Activated CD4-positive, alpha-beta T cell treated with anti-CD3 and anti-CD28 coated beads for 36 hours (primary cell): ENCODE measurements at regions of chr17 and their contacts with region 1.

Region 1: DNA sequence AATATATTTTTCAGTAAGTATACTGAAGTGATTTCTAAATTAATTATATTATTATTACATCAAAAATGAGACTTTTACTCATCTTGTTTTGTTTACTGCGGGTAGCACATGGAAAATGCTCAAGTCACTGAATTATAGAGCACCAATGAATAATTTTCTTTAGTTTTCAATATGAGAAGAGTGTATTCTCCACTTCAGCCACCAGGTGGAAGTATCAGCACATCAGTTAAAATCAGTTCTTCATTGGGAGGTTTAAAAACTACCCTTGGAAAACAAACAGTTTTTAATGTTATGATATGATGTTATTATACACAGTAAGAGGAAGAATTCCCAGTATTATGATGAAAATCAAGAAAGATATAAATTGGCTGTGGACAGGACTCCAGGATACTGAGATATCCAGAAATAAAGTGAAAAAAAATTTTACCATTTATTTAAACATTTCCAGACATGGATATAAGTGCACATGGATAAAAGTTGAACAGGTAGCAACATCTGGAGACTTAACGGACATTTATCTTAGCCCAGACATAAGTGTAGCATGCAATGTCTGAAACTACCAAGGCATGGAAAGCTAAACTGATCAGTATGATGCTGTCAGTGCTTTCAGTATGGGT is 467.3 kb downstream of the KCNJ2 start:
- DNase-seq: peak; percentile 5
- ATAC-seq: no peak
- H3K4me3 Mint-ChIP-seq: no peak overlapping the region
- H3K27ac Mint-ChIP-seq: no peak overlapping the region
- H3K4me1 Mint-ChIP-seq: no peaks in the 10 kb centered on the region
- H3K27me3 Mint-ChIP-seq: peaks cover 2% of the 10 kb centered on the region

Region 2: GRCh38 chr17:70478902-70479301 is 157.7 kb before region 1 on chr17:
- CTCF ChIA-PET with region 1: no interaction called
- POLR2A ChIA-PET with region 1: no interaction called
- intact Hi-C with region 1: no loop called
- DNase-seq: no peak
- ATAC-seq: no peak
- H3K4me3 Mint-ChIP-seq: no peak overlapping the region
- H3K27ac Mint-ChIP-seq: no peak overlapping the region
- H3K4me1 Mint-ChIP-seq: no peaks in the 10 kb centered on the region
- H3K27me3 Mint-ChIP-seq: no peaks in the 10 kb centered on the region

Region 3: DNA sequence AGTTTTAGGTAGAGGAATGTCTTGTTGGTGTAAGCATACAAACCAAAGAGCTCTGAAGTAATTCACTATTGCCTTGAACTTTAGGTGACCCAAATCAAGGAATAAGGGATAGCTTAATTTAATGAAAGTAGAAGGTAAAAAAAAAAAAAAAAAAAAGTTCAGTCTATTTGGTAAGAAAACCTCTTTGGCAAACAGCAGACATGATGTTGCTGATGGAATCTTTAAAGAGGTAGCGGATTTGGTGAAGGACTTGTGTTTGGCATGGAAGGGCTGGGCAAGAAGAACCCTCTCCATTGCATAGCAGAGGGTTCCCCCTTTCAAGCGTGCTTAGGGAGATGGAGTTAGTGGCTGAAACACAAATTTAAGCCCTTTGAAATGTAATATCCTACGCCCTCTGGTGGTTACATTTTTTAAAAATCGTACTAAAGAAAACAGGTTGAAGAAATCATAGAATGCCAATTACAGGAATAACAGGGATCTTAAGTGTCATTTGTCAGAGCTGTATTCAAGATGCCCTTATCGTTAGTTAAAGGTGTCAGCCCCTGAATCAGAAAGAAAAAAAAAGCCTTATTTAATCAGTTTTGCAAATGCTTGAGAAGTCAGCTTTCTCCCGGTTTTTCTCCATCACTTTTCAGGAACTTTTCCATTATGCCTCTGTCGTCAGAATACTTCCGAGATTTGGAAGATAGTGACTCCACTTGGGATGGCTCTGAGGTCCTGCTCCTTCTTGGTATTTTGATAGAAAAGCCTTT is 84.2 kb before region 1 on chr17:
- CTCF ChIA-PET with region 1: no interaction called
- POLR2A ChIA-PET with region 1: no interaction called
- intact Hi-C with region 1: no loop called
- DNase-seq: no peak
- ATAC-seq: no peak
- H3K4me3 Mint-ChIP-seq: no peak overlapping the region
- H3K27ac Mint-ChIP-seq: no peak overlapping the region
- H3K4me1 Mint-ChIP-seq: no peaks in the 10 kb centered on the region
- H3K27me3 Mint-ChIP-seq: no peaks in the 10 kb centered on the region

Region 4: DNA sequence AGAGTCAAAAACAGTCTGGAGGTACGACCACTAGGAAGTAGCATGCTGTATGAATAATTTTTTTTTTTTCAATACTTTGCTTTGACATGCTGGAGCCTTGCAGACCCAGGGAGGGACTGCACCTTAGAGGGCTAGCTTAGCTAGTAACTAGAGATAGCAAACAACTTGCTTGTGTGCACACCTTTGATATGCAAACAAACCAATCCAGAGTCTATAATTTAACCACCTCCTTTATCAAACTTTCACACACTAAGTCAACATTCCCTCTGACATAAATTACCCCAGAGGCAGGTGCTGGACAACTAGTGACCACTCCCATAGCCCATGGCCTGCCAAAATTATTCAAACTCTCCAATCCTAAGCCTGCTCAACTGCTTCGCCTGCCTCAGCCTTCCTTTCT is 358.5 kb after region 1 on chr17:
- CTCF ChIA-PET with region 1: no interaction called
- POLR2A ChIA-PET with region 1: no interaction called
- intact Hi-C with region 1: no loop called
- DNase-seq: no peak
- ATAC-seq: no peak
- H3K4me3 Mint-ChIP-seq: no peak overlapping the region
- H3K27ac Mint-ChIP-seq: no peak overlapping the region
- H3K4me1 Mint-ChIP-seq: no peaks in the 10 kb centered on the region
- H3K27me3 Mint-ChIP-seq: no peaks in the 10 kb centered on the region

Region 5: DNA sequence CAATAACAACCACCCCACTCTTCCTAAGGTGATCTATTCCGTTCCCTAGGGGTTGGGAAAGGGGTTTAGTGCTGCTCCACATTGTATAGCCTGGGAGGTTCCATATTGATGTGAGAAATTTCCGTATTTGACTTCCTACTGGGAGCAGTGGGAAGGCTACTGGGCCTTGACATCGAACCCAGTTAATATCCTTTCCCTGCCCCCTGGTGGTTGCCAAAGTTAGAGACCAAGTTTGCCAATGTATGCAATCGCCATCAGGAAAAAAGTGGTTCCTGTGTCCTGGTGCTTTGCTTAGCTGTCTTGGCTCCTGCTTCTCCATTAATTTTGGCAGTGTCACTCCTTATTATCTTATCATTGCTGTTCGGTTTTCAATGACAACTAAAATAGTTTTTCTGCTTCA is 447.6 kb after region 1 on chr17:
- CTCF ChIA-PET with region 1: no interaction called
- POLR2A ChIA-PET with region 1: no interaction called
- intact Hi-C with region 1: loop called (anchors 2 to 10 kb)
- DNase-seq: no peak
- ATAC-seq: no peak
- H3K4me3 Mint-ChIP-seq: no peak overlapping the region
- H3K27ac Mint-ChIP-seq: no peak overlapping the region
- H3K4me1 Mint-ChIP-seq: no peaks in the 10 kb centered on the region
- H3K27me3 Mint-ChIP-seq: no peaks in the 10 kb centered on the region

Region 6: DNA sequence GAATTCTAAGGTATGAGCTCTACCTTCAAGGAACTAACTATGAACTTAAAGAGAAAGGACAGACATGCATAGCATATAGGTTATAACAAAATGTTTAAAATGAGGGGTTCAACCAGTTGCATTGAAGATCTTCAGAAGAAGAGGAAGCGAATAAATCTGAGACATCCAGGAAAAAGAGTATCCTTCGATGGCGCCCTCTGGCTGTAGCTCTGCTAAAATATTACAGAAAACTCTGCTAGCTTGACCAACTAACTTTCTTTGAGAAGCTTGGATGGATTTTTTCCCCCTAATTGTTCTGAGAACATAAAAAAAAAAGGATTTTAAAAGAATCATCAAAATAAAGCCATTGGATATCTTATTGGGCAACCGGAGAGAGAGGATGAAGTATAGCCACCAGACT is 824.3 kb after region 1 on chr17:
- CTCF ChIA-PET with region 1: no interaction called
- POLR2A ChIA-PET with region 1: no interaction called
- intact Hi-C with region 1: loop called in 1 of 2 experiments (anchors 5 kb)
- DNase-seq: peak; percentile 8
- ATAC-seq: no peak
- H3K4me3 Mint-ChIP-seq: no peak overlapping the region
- H3K27ac Mint-ChIP-seq: no peak overlapping the region
- H3K4me1 Mint-ChIP-seq: no peaks in the 10 kb centered on the region
- H3K27me3 Mint-ChIP-seq: no peaks in the 10 kb centered on the region

Region 7: DNA sequence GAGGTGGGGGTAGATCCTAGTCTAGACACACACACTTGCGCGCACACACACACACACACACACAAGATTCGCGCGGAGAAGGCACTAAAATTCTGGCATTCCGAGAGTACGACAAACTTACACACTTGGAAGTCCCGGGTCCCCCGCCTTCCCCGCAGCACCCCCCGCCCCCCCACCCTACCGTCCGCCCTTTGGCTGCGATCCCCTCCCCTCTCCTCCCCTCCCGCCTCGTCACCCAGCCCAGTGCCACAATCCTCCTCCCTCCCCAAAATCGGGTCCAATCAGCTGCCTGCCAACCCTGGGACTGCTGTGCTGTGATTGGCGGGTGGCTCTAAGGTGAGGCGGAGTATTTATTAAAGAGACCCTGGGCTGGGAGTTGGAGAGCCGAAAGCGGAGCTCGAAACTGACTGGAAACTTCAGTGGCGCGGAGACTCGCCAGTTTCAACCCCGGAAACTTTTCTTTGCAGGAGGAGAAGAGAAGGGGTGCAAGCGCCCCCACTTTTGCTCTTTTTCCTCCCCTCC is 1484.1 kb after region 1 on chr17 and contains the start of gene SOX9:
- CTCF ChIA-PET with region 1: no interaction called
- POLR2A ChIA-PET with region 1: no interaction called
- intact Hi-C with region 1: loop called in 1 of 2 experiments (anchors 1 kb)
- DNase-seq: no peak
- ATAC-seq: no peak
- H3K4me3 Mint-ChIP-seq: peak within 1 kb of the TSS; percentile 35
- H3K27ac Mint-ChIP-seq: no peak within 1 kb of the TSS
- H3K4me1 Mint-ChIP-seq: peaks cover 14% of the 10 kb centered on the region
- H3K27me3 Mint-ChIP-seq: peaks cover 68% of the 10 kb centered on the region
- total RNA-seq, gene SOX9: not detected

Region 8: DNA sequence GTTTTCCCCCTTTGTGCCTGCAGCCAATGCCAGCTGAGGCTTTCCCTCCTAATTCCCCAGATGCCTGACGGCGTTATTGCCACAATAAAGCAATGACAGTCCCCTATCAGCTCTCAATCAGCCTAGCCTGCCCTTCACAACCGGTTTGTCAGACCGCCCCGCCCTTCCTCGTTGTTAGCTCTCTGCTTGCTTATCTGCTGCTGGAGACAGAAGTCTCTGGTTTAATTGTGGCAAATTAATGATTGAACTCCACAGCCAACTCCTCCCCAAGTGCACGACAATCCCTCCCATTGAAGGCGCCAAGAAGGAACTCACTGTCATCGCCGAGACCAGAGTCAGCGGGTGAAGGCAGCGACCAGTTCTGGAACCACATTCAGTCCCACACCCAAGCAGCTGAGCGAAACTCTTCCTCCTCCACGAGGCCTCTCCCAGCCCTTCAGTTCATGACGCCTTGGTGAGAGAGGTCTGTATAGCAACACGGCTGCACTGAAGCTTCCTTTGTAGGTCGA is 1981.4 kb after region 1 on chr17:
- CTCF ChIA-PET with region 1: no interaction called
- POLR2A ChIA-PET with region 1: no interaction called
- intact Hi-C with region 1: loop called in 1 of 2 experiments (anchors 5 kb)
- DNase-seq: peak; percentile 27
- ATAC-seq: peak; percentile 42
- H3K4me3 Mint-ChIP-seq: peak overlapping the region; percentile 39
- H3K27ac Mint-ChIP-seq: no peak overlapping the region
- H3K4me1 Mint-ChIP-seq: peaks cover 18% of the 10 kb centered on the region
- H3K27me3 Mint-ChIP-seq: peaks cover 37% of the 10 kb centered on the region